ENCODE measurements at regions of chr10 and their contacts with region 1.

Region 1: DNA sequence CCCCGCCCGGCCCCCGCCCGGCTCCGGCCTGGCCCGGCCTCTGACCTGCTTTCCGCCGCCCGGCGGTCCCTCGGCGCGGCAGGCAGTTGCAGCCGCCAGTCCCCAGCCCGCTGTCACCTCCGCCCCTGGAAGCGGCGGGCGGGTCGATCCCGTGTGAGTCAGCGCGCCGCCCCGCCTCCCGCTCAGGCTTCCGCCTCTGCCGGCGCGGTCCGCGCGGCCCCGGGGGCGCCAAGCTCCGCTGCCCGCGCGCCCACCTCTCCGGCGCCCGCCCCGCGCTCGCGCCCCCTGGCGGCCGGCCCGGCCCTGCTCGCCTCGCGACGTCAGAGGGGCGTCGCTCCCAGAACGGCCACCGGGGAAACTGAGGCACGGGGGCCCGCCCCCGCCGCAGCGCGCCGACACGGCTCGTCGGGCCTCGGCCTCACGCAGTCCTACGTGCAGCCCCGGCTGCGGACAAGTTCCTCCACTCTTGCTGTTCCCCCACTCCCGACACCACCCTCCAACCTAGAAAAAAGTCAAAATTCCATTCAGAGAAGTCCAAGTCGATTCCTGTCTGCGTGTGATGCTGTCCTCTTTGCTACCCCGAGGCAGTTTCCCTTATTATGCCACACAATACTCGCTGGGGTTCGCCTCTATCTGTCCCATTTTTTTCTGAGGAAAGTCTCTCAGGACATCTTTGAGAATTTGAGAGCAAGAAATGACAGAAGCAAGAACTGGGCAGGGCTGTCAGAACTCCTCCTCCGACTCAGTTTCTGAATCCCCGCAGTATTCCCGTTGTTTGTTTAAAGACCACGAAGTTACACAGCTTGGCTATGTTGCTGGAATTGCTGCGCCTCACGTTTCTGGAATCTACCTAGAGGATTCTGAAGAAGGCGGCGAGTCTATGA is at the start of gene DNMBP:
- DNase-seq: peak; percentile 91
- ATAC-seq: peak; percentile 90 to 98
- total RNA-seq, gene DNMBP: 6.7 to 7.9 TPM

Region 2: GRCh38 chr10:99827936-99828335 is 182.1 kb before region 1 on chr10:
- intact Hi-C with region 1: no loop called
- DNase-seq: no peak
- ATAC-seq: no peak

Region 3: GRCh38 chr10:99920901-99921300 is 89.1 kb before region 1 on chr10:
- intact Hi-C with region 1: loop called in 1 of 2 experiments (anchors 5 kb)
- DNase-seq: no peak
- ATAC-seq: no peak

Region 4: DNA sequence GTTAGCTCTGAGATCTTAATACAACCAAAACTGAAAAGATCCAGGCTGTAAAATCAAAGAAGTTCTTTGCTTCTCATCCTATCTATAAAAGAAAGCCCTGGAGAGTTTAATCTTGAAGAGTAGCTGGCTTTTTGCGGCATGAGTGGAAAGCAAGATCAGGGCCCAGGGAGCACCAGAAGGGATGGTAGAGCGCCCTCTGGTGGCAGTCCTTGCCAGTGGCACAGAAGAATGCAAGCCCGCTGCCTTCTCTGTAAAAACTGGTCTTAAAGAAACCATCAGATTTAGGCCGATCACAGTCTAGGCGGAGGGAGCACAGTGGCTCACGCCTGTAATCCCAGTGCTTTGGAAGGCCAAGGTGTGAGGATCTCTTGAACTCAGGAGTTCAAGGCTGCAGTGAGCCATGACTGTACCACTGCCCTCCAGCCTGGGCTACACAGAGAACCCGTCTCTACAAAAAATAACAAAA is 36.0 kb after region 1 on chr10:
- intact Hi-C with region 1: loop called in 1 of 2 experiments (anchors 2 kb)
- DNase-seq: peak; percentile 91
- ATAC-seq: peak; percentile 77 to 89

Region 5: DNA sequence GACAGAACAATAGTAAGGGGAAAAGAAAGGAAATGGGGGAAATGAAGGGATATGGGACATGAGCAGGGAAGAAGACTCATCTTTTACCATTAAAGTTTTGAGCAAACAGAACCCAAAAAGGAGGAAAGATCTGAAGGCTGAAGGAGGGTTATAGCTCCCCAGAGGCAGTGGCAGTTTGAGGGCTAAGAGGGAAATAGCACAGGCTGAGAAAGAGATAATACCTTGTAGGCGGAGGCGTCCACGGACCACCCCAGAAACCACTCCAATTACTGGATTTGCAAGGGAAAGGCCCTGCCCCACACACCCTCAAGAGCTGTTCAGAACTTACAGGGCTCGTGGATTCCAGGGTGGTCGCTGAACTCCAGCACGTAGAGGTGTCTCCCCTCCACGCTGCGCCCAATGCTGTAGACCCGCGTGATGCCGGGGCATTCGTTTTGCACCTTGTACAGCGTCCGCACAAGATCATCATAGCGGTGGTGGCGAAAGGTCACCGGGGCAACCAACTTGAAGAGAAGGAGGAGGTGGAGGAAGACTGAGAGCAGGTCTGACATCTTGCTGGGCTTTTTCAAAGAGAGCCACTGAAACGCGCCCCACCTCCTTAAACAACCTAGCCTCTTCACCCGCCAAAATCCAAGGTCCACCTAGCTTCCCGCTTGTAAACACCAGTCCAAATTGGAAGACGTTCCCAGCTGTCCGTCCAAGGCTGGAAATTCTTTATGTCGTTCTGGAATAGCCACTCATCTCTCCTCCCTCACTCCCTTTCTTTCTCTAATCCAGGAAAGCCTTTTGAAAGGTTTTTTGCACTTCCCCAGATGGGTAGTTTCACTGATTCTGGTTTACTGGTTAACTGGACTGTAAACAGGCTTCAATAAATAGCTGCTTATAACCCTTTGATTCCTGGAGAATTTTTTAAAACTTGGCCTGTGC is 71.3 kb after region 1 on chr10 and contains the start of gene CPN1:
- intact Hi-C with region 1: no loop called
- DNase-seq: no peak
- ATAC-seq: no peak
- total RNA-seq, gene CPN1: not detected

Region 6: GRCh38 chr10:100167553-100168312 is 157.7 kb after region 1 on chr10:
- intact Hi-C with region 1: no loop called
- DNase-seq: no peak
- ATAC-seq: no peak